Psoas muscle (tissue), 8 donors: ENCODE measurements at regions of chr20 and their contacts with region 1.

Region 1: GRCh38 chr20:50575847-50576720 is 65.9 kb downstream of the PTPN1 start:
- DNase-seq: peak; percentile 70 to 83
- ATAC-seq: peak; percentile 43 to 60 (median 46)
- H3K4me3 ChIP-seq: no peak overlapping the region
- H3K27ac ChIP-seq: peak overlapping the region; percentile 92
- H3K4me1 ChIP-seq: peaks cover 58% of the 10 kb centered on the region
- H3K27me3 ChIP-seq: no peaks in the 10 kb centered on the region
- CTCF ChIP-seq: peak; percentile 75

Region 2: DNA sequence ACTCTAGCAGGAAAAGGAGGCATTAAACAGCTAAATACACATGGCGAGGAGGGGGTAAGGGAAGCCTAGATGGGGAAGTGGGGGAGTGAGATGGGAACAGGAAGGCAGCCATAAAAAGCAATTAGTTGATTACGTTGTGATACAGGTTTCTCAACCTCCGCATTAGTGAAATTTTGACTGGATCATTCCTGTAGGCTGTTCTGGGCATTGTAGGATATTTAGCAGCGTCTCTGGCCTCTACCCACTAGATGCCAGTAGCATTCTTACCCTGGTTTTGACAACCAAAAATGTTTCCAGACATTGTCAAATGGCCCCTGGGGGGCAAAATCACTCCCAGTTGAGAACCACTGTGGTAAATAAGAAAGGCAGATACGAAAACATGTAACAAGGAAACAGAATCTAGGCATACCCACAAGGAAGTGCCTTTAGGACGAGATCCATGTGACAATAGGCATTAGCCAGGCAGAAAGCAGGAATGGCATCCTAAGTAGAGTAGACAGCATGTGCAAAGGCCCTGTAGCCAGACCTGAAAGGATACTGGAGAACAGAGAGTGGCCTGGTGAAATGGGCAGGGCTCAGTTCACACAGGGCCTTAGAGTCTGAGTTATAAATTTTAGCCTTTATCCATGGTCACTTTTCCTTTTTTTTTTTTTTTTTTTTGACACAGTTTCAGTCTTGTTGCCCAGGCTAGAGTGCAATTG is 91.7 kb before region 1 on chr20:
- intact Hi-C with region 1: loop called in 1 of 2 experiments (anchors 5 kb)
- DNase-seq: no peak
- ATAC-seq: no peak
- H3K4me3 ChIP-seq: peak overlapping the region; percentile 63
- H3K27ac ChIP-seq: peak overlapping the region; percentile 84
- H3K4me1 ChIP-seq: peaks cover 9% of the 10 kb centered on the region
- H3K27me3 ChIP-seq: no peaks in the 10 kb centered on the region
- CTCF ChIP-seq: no peak

Region 3: DNA sequence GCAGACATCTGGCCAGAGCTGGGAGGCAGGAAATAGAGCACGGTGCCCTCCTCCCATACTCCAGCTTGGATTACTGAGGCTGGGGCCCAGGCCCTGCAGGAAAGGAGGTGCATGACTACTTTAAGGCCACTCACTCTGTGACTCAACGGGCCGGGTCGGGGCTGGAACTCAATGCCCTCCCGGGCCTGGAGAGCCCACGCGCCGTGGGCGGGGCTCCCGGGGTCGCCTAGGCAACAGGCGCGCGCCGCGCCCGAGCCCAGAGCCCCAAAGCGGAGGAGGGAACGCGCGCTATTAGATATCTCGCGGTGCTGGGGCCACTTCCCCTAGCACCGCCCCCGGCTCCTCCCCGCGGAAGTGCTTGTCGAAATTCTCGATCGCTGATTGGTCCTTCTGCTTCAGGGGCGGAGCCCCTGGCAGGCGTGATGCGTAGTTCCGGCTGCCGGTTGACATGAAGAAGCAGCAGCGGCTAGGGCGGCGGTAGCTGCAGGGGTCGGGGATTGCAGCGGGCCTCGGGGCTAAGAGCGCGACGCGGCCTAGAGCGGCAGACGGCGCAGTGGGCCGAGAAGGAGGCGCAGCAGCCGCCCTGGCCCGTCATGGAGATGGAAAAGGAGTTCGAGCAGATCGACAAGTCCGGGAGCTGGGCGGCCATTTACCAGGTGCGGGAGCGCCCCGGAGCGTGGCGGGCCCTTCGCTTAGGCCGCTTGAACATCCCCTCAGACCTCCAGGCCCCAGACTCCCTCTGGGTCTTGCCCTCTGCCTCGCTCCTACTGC is 66.0 kb before region 1 on chr20 and contains the start of gene PTPN1:
- intact Hi-C with region 1: loop called in 1 of 2 experiments (anchors 2 kb)
- DNase-seq: peak; percentile 99
- ATAC-seq: peak; percentile 88 to 96 (median 91)
- H3K4me3 ChIP-seq: peak within 1 kb of the TSS; percentile 99
- H3K27ac ChIP-seq: peak within 1 kb of the TSS; percentile 98
- H3K4me1 ChIP-seq: peaks cover 44% of the 10 kb centered on the region
- H3K27me3 ChIP-seq: no peaks in the 10 kb centered on the region
- CTCF ChIP-seq: no peak
- total RNA-seq, gene PTPN1: 29.7 to 112 (median 56.3) TPM